Endothelial cell of umbilical vein (primary cell): ENCODE measurements at regions of chr7 and their contacts with region 1.

Region 1: DNA sequence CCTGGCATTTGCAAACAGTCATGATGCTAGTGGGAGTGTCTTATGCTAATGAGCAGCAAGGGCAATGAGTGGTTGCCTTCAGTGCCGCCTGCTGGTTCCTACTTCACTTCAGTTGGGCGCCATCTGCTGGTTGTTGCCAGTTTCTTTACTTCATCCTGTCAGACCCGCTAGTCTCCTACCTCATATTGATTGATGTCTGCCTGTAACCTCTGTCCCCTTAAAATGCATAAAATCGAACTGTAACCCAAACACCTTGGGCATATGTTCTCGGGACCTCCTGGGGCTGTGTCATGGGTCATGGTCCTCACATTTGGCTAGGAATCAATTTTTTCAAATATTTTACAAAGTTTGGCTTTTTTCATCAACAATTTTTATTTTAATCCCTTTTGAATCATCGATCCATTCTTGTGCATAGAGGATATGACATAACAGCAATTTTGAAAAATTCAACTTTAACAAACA is 62.8 kb upstream of the C7orf33 start:
- DNase-seq: peak; percentile 73
- H3K4me3 ChIP-seq: no peak overlapping the region
- H3K27ac ChIP-seq: no peak overlapping the region
- H3K4me1 ChIP-seq: no peaks in the 10 kb centered on the region
- H3K27me3 ChIP-seq: no peaks in the 10 kb centered on the region
- CTCF ChIP-seq: peak; percentile 75 to 89
- POLR2A ChIP-seq: no peak

Region 2: GRCh38 chr7:148503875-148504487 is 23.8 kb before region 1 on chr7:
- CTCF ChIA-PET with region 1: interaction called, 3 read pairs
- POLR2A ChIA-PET with region 1: no interaction called
- dilution Hi-C with region 1: no loop called
- intact Hi-C with region 1: loop called (anchors 1 kb)
- DNase-seq: peak; percentile 41
- H3K4me3 ChIP-seq: no peak overlapping the region
- H3K27ac ChIP-seq: no peak overlapping the region
- H3K4me1 ChIP-seq: no peaks in the 10 kb centered on the region
- H3K27me3 ChIP-seq: peaks cover 0 to 2% of the 10 kb centered on the region in 2 experiments
- CTCF ChIP-seq: peak; percentile 36 to 37
- POLR2A ChIP-seq: no peak